PC-9 (cell line): ENCODE measurements at regions of chr16 and their contacts with region 1.

Region 1: GRCh38 chr16:54027126-54027922 is 259.3 kb downstream of the IRX3 start:
- DNase-seq: peak; percentile 66 to 96
- H3K4me3 ChIP-seq: peak overlapping the region; percentile 29; the same call in 1 of the 2 replicates
- H3K27ac ChIP-seq: peak overlapping the region; percentile 90
- H3K4me1 ChIP-seq: peaks cover 69% of the 10 kb centered on the region
- H3K27me3 ChIP-seq: no peaks in the 10 kb centered on the region
- CTCF ChIP-seq: no peak

Region 2: GRCh38 chr16:53822936-53823529 is 204.3 kb before region 1 on chr16:
- CTCF ChIA-PET with region 1: no interaction called
- POLR2A ChIA-PET with region 1: no interaction called
- intact Hi-C with region 1: loop called (anchors 5 kb)
- DNase-seq: no peak
- H3K4me3 ChIP-seq: no peak overlapping the region
- H3K27ac ChIP-seq: peak overlapping the region; percentile 55
- H3K4me1 ChIP-seq: peaks cover 27% of the 10 kb centered on the region
- H3K27me3 ChIP-seq: no peaks in the 10 kb centered on the region
- CTCF ChIP-seq: no peak

Region 3: GRCh38 chr16:54080524-54081008 is 53.2 kb after region 1 on chr16:
- CTCF ChIA-PET with region 1: no interaction called
- POLR2A ChIA-PET with region 1: no interaction called
- intact Hi-C with region 1: loop called (anchors 1 kb)
- DNase-seq: peak; percentile 50 to 99
- H3K4me3 ChIP-seq: peak overlapping the region; percentile 8; the same call in 1 of the 2 replicates
- H3K27ac ChIP-seq: peak overlapping the region; percentile 92
- H3K4me1 ChIP-seq: peaks cover 63% of the 10 kb centered on the region
- H3K27me3 ChIP-seq: no peaks in the 10 kb centered on the region
- CTCF ChIP-seq: no peak

Region 4: GRCh38 chr16:54286090-54286993 is 259.0 kb after region 1 on chr16 and contains the start of gene IRX3:
- CTCF ChIA-PET with region 1: no interaction called
- POLR2A ChIA-PET with region 1: interaction called, 3 read pairs
- intact Hi-C with region 1: loop called (anchors 5 kb)
- DNase-seq: peak; percentile 88 to 90
- H3K4me3 ChIP-seq: peak within 1 kb of the TSS; percentile 98
- H3K27ac ChIP-seq: peak within 1 kb of the TSS; percentile 86
- H3K4me1 ChIP-seq: peaks cover 6% of the 10 kb centered on the region
- H3K27me3 ChIP-seq: no peaks in the 10 kb centered on the region
- CTCF ChIP-seq: no peak
- total RNA-seq, gene IRX3: 13.1 and 16.0 TPM in 2 replicates